ENCODE measurements at regions of chr7 and their contacts with region 1.

Region 1: GRCh38 chr7:26318921-26319320 is 27.3 kb downstream of the SNX10 start:
- DNase-seq: no peak
- H3K4me3 Mint-ChIP-seq: no peak overlapping the region
- H3K27ac Mint-ChIP-seq: no peak overlapping the region
- H3K4me1 Mint-ChIP-seq: peaks cover 15% of the 10 kb centered on the region
- H3K27me3 Mint-ChIP-seq: no peaks in the 10 kb centered on the region

Region 2: GRCh38 chr7:25028370-25029021 is 1290.4 kb before region 1 on chr7:
- intact Hi-C with region 1: no loop called
- DNase-seq: peak; percentile 32
- H3K4me3 Mint-ChIP-seq: peak overlapping the region; percentile 32
- H3K27ac Mint-ChIP-seq: peak overlapping the region; percentile 82
- H3K4me1 Mint-ChIP-seq: peaks cover 51% of the 10 kb centered on the region
- H3K27me3 Mint-ChIP-seq: peaks cover 17% of the 10 kb centered on the region

Region 3: GRCh38 chr7:26351171-26351570 is 32.2 kb after region 1 on chr7:
- intact Hi-C with region 1: loop called (anchors 5 kb)
- DNase-seq: no peak
- H3K4me3 Mint-ChIP-seq: no peak overlapping the region
- H3K27ac Mint-ChIP-seq: no peak overlapping the region
- H3K4me1 Mint-ChIP-seq: peaks cover 13% of the 10 kb centered on the region
- H3K27me3 Mint-ChIP-seq: no peaks in the 10 kb centered on the region

Measured in activated T-helper 2 cell treated with anti-CD3 and anti-CD28 coated beads, Interferon-gamma antibody, Interleukin-2, Interleukin-4, amounts not matched to agents 10 μg/mL and 5 μg/mL and 100 μg/mL, durations not matched to agents 14 hours and 24 hours and 36 hours (primary cell).